Common myeloid progenitor, CD34-positive (primary cell): ENCODE measurements at regions of chr12 and their contacts with region 1.

Region 1: DNA sequence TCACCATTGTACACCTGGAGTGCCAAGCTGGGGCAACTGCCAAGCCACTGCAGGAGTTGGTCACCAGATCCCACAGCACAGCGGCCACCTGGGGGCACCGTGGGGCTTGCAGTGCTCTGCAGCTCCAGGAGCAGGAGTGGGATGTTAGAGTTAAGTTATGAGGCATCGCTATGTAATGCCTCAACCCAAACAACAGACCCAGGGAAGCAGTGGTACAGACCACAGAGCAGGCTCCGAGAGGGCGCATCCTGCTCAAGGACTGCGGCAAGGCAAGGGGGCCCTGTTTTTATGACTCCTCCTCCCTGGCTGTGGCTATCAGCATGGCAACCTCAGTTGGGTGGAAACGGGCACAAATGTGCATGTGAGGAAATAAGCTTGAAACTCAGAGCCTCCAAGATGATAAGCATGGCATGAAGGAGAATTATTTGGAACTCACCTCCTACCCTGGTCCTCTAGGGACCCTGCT is 63.1 kb downstream of the ARL6IP4 start:
- DNase-seq: peak; percentile 93 to 97 (median 97)
- H3K4me3 ChIP-seq: peak overlapping the region in 3 of 7 experiments; percentile 6 to 29 (median 26)
- H3K27ac ChIP-seq: peak overlapping the region; percentile 40 to 78
- H3K4me1 ChIP-seq: peaks cover 6 to 52% (median 32%) of the 10 kb centered on the region in 4 experiments
- H3K27me3 ChIP-seq: no peaks in the 10 kb centered on the region

Region 2: GRCh38 chr12:123013185-123014095 is 30.1 kb before region 1 on chr12:
- CTCF ChIA-PET with region 1: no interaction called
- POLR2A ChIA-PET with region 1: no interaction called
- DNase-seq: no peak
- H3K4me3 ChIP-seq: no peak overlapping the region
- H3K27ac ChIP-seq: no peak overlapping the region
- H3K4me1 ChIP-seq: no peaks in the 10 kb centered on the region
- H3K27me3 ChIP-seq: no peaks in the 10 kb centered on the region

Region 3: GRCh38 chr12:123062681-123063486 is 19.3 kb after region 1 on chr12:
- CTCF ChIA-PET with region 1: interaction called, 72 read pairs
- POLR2A ChIA-PET with region 1: no interaction called
- DNase-seq: peak in 2 of 3 donors; percentile 55 to 76
- H3K4me3 ChIP-seq: no peak overlapping the region
- H3K27ac ChIP-seq: peak overlapping the region in 1 of 2 experiments; percentile 18
- H3K4me1 ChIP-seq: peaks cover 2 to 76% (median 49%) of the 10 kb centered on the region in 4 experiments
- H3K27me3 ChIP-seq: no peaks in the 10 kb centered on the region

Region 4: GRCh38 chr12:123089631-123090353 is 46.2 kb after region 1 on chr12:
- CTCF ChIA-PET with region 1: interaction called, 14 read pairs
- POLR2A ChIA-PET with region 1: no interaction called
- DNase-seq: peak; percentile 38 to 84 (median 75)
- H3K4me3 ChIP-seq: no peak overlapping the region
- H3K27ac ChIP-seq: no peak overlapping the region
- H3K4me1 ChIP-seq: peaks cover 10 to 55% (median 45%) of the 10 kb centered on the region in 4 experiments
- H3K27me3 ChIP-seq: no peaks in the 10 kb centered on the region

Region 5: GRCh38 chr12:123150744-123151456 is 107.3 kb after region 1 on chr12 and contains the start of gene PITPNM2:
- CTCF ChIA-PET with region 1: interaction called, 128 read pairs
- POLR2A ChIA-PET with region 1: no interaction called
- DNase-seq: peak; percentile 46 to 76 (median 57)
- H3K4me3 ChIP-seq: peak within 1 kb of the TSS; percentile 63 to 85 (median 76)
- H3K27ac ChIP-seq: peak within 1 kb of the TSS; percentile 29 to 61
- H3K4me1 ChIP-seq: peaks cover 2 to 42% (median 30%) of the 10 kb centered on the region in 4 experiments
- H3K27me3 ChIP-seq: no peaks in the 10 kb centered on the region